Activated T-helper 1 cell treated with anti-CD3 and anti-CD28 coated beads, Interleukin-12 subunit alpha, Interleukin-12 subunit beta, Interleukin-2, Interleukin-4 antibody, amounts not matched to agents 30 ng/mL and 10 ng/mL and 1 ng/mL, durations not matched to agents 14 hours and 24 hours and 36 hours (primary cell): ENCODE measurements at regions of chr10 and their contacts with region 1.

Region 1: GRCh38 chr10:7314170-7314569 is 96.7 kb downstream of the SFMBT2 start:
- DNase-seq: no peak
- H3K4me3 Mint-ChIP-seq: no peak overlapping the region
- H3K27ac Mint-ChIP-seq: peak overlapping the region; percentile 89
- H3K4me1 Mint-ChIP-seq: peaks cover 45% of the 10 kb centered on the region
- H3K27me3 Mint-ChIP-seq: no peaks in the 10 kb centered on the region

Region 2: GRCh38 chr10:7275761-7276440 is 38.3 kb before region 1 on chr10:
- intact Hi-C with region 1: loop called (anchors 1 kb)
- DNase-seq: no peak
- H3K4me3 Mint-ChIP-seq: no peak overlapping the region
- H3K27ac Mint-ChIP-seq: peak overlapping the region; percentile 83
- H3K4me1 Mint-ChIP-seq: peaks cover 57% of the 10 kb centered on the region
- H3K27me3 Mint-ChIP-seq: no peaks in the 10 kb centered on the region

Region 3: DNA sequence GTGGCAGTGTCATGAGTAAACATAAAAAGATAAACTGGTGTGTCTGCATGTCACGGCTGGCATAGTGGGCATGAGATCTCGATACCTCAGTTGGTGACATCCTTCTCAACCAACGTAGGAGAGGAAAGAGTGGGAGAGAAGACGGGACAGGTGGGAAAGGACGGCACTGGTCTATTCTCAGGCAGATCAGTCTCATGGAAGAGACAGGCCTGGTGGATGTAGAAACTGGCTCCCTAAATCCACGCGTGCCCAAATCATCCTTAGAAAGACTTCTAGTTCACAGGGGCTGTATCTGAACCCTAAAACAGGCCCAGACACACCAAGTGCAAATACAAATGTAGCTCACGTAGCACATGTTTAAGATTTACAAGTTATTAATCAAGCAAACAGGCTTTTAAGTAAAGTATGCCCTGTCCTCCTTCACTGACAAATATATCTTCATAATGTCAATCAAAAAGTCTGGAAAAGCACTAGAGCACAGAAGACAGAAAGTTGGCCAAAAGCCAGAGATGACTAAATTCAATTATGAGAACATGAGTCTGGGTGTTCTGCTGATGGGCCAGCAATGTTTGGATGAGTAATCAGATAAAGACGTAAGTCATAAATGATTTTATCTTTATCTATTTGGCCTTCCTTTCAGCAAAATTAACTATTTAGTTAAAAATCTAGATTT is 40.3 kb after region 1 on chr10:
- intact Hi-C with region 1: no loop called
- DNase-seq: no peak
- H3K4me3 Mint-ChIP-seq: no peak overlapping the region
- H3K27ac Mint-ChIP-seq: no peak overlapping the region
- H3K4me1 Mint-ChIP-seq: peaks cover 21% of the 10 kb centered on the region
- H3K27me3 Mint-ChIP-seq: no peaks in the 10 kb centered on the region

Region 4: GRCh38 chr10:7365027-7365745 is 51.0 kb after region 1 on chr10:
- intact Hi-C with region 1: no loop called
- DNase-seq: no peak
- H3K4me3 Mint-ChIP-seq: no peak overlapping the region
- H3K27ac Mint-ChIP-seq: no peak overlapping the region
- H3K4me1 Mint-ChIP-seq: peaks cover 10% of the 10 kb centered on the region
- H3K27me3 Mint-ChIP-seq: no peaks in the 10 kb centered on the region